AG04450 (cell line): ENCODE measurements at regions of chr16 and their contacts with region 1.

Region 1: DNA sequence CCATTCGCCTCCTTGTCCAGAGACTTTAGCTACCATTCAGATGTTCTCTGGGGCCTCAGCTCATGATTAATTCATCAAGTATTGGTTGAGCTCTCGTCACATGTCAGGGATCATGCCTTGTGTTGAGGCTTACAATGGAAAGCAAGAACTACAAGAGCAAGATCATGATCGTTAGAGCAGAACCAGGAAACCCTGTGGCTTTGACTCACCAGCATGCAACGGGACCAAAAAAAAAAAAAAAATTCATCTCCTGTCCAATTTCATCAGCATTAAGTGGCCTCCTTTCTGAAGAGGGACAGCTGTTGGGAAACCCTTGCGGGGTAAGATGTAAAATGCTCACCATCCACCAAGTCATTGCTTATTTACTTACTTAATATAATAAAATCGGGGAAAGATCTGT is 12.1 kb upstream of the USP10 start:
- DNase-seq: peak; percentile 67
- H3K4me3 ChIP-seq: no peak overlapping the region
- H3K27ac ChIP-seq: peak overlapping the region; percentile 86
- H3K27me3 ChIP-seq: no peaks in the 10 kb centered on the region
- CTCF ChIP-seq: no peak

Region 2: GRCh38 chr16:84562174-84562815 is 125.4 kb before region 1 on chr16:
- CTCF ChIA-PET with region 1: no interaction called
- POLR2A ChIA-PET with region 1: no interaction called
- DNase-seq: no peak
- H3K4me3 ChIP-seq: no peak overlapping the region
- H3K27ac ChIP-seq: no peak overlapping the region
- H3K27me3 ChIP-seq: no peaks in the 10 kb centered on the region
- CTCF ChIP-seq: no peak

Region 3: DNA sequence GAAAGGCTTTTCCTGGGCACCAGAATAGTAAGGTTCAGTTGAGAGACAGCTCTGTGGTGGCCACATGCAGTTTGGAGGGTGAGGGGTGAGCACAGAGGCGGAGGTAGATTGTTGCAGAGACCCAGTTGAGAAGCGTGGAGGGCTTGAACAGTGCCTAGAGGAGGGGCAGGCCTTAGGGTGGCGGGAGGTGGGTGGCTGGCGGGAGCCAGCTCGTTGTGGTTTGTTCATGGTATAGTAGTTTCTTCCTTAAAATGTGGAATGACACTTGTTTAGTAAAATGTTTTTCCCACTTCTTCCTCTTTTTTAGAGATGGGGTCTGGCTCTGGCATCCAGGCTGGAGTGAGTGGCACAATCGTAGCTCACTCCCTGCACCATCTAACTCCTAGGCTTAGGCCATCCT is 26.3 kb after region 1 on chr16:
- CTCF ChIA-PET with region 1: interaction called, 10 read pairs
- POLR2A ChIA-PET with region 1: no interaction called
- DNase-seq: no peak
- H3K4me3 ChIP-seq: no peak overlapping the region
- H3K27ac ChIP-seq: no peak overlapping the region
- H3K27me3 ChIP-seq: no peaks in the 10 kb centered on the region
- CTCF ChIP-seq: no peak